GM12878 (cell line): ENCODE measurements at regions of chr2 and their contacts with region 1.

Region 1: DNA sequence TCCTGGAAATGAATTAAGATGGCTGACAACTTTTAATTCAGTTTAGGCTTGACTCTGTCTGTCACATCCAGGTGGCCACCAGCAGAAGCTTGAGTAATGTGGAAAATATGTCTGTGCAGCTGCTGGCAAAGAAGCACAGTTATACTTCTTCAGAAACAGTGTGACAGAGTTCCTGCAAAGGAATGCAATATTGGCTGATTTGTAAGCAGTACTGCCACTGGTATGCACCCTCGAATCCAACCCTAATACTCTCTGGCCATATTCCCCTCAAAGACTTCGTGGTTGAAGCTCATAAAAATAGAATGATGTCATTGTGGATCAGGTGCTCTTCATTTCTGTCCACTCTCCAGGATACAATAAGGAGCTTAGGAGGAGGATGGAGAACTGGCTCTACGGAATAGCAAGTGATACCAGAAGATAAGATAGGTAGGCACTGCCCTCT is 86.2 kb downstream of the METTL8 start:
- DNase-seq: no peak
- ATAC-seq: peak; percentile 60
- H3K4me3 ChIP-seq: 0 out of 2 replicates have a peak overlapping the region, but pooled peaks have one; percentile 28
- H3K27ac ChIP-seq: peak overlapping the region; percentile 81
- H3K4me1 ChIP-seq: peaks cover 29% of the 10 kb centered on the region
- H3K27me3 ChIP-seq: no peaks in the 10 kb centered on the region
- CTCF ChIP-seq: no peak
- EP300 ChIP-seq: no peak
- POLR2A ChIP-seq: no peak
- RAD21 ChIP-seq: no peak

Region 2: GRCh38 chr2:171325886-171326585 is 21.6 kb before region 1 on chr2:
- CTCF ChIA-PET with region 1: interaction called, 12 read pairs
- POLR2A ChIA-PET with region 1: interaction called, 13 read pairs
- RAD21 ChIA-PET with region 1: interaction called, 16 read pairs
- SMC1A ChIA-PET with region 1: interaction called, 56 read pairs
- in situ Hi-C with region 1: no loop called
- intact Hi-C with region 1: no loop called
- DNase-seq: no peak
- ATAC-seq: peak; percentile 71
- H3K4me3 ChIP-seq: peak overlapping the region; percentile 41; the same call in 1 of the 2 replicates
- H3K27ac ChIP-seq: peak overlapping the region; percentile 100
- H3K4me1 ChIP-seq: peaks cover 57% of the 10 kb centered on the region
- H3K27me3 ChIP-seq: no peaks in the 10 kb centered on the region
- CTCF ChIP-seq: no peak
- EP300 ChIP-seq: peak; percentile 61 to 62; a peak in 2 of 4 replicates
- POLR2A ChIP-seq: no peak
- RAD21 ChIP-seq: no peak

Region 3: GRCh38 chr2:171360905-171361304 is 13.3 kb after region 1 on chr2:
- CTCF ChIA-PET with region 1: interaction called, 5 read pairs
- POLR2A ChIA-PET with region 1: interaction called, 5 read pairs
- RAD21 ChIA-PET with region 1: interaction called, 4 read pairs
- SMC1A ChIA-PET with region 1: interaction called, 10 read pairs
- in situ Hi-C with region 1: no loop called
- intact Hi-C with region 1: no loop called
- DNase-seq: no peak
- ATAC-seq: peak; percentile 80
- H3K4me3 ChIP-seq: no peak overlapping the region
- H3K27ac ChIP-seq: peak overlapping the region; percentile 24; the same call in 1 of the 2 replicates
- H3K4me1 ChIP-seq: peaks cover 13% of the 10 kb centered on the region
- H3K27me3 ChIP-seq: no peaks in the 10 kb centered on the region
- CTCF ChIP-seq: no peak
- EP300 ChIP-seq: no peak
- POLR2A ChIP-seq: no peak
- RAD21 ChIP-seq: no peak

Region 4: GRCh38 chr2:171399292-171399691 is 51.7 kb after region 1 on chr2:
- CTCF ChIA-PET with region 1: interaction called, 4 read pairs
- POLR2A ChIA-PET with region 1: no interaction called
- RAD21 ChIA-PET with region 1: interaction called, 3 read pairs
- SMC1A ChIA-PET with region 1: interaction called, 10 read pairs
- in situ Hi-C with region 1: no loop called
- intact Hi-C with region 1: no loop called
- DNase-seq: no peak
- ATAC-seq: peak; percentile 54
- H3K4me3 ChIP-seq: no peak overlapping the region
- H3K27ac ChIP-seq: no peak overlapping the region
- H3K4me1 ChIP-seq: no peaks in the 10 kb centered on the region
- H3K27me3 ChIP-seq: no peaks in the 10 kb centered on the region
- CTCF ChIP-seq: no peak
- EP300 ChIP-seq: no peak
- POLR2A ChIP-seq: no peak
- RAD21 ChIP-seq: no peak

Region 5: GRCh38 chr2:171433763-171434670 is 86.4 kb after region 1 on chr2 and contains the starts of genes DCAF17 and METTL8:
- CTCF ChIA-PET with region 1: no interaction called
- POLR2A ChIA-PET with region 1: no interaction called
- RAD21 ChIA-PET with region 1: interaction called, 10 read pairs
- SMC1A ChIA-PET with region 1: interaction called, 8 read pairs
- in situ Hi-C with region 1: no loop called
- intact Hi-C with region 1: loop called (anchors 5 kb)
- DNase-seq: peak; percentile 94
- ATAC-seq: peak; percentile 94
- H3K4me3 ChIP-seq: peak within 1 kb of the TSS; percentile 81
- H3K27ac ChIP-seq: peak within 1 kb of the TSS; percentile 93
- H3K4me1 ChIP-seq: peaks cover 13% of the 10 kb centered on the region
- H3K27me3 ChIP-seq: no peaks in the 10 kb centered on the region
- CTCF ChIP-seq: peak; percentile 52 to 72 (median 61)
- EP300 ChIP-seq: no peak
- POLR2A ChIP-seq: peak; percentile 92
- RAD21 ChIP-seq: peak; percentile 33
- polyA plus RNA-seq, gene DCAF17: 5.2 to 5.6 TPM
- polyA plus RNA-seq, gene METTL8: 34.9 to 42.5 TPM